Right cardiac atrium (tissue), 5 donors: ENCODE measurements at regions of chr6 and their contacts with region 1.

Region 1: GRCh38 chr6:168035098-168035660 is 37.7 kb downstream of the KIF25 start:
- DNase-seq: peak; percentile 64 to 89 (median 83)
- ATAC-seq: peak; percentile 79 to 82
- H3K4me3 ChIP-seq: peak overlapping the region; percentile 13
- H3K27ac ChIP-seq: peak overlapping the region; percentile 88
- H3K4me1 ChIP-seq: peaks cover 4% of the 10 kb centered on the region
- H3K27me3 ChIP-seq: no peaks in the 10 kb centered on the region

Region 2: DNA sequence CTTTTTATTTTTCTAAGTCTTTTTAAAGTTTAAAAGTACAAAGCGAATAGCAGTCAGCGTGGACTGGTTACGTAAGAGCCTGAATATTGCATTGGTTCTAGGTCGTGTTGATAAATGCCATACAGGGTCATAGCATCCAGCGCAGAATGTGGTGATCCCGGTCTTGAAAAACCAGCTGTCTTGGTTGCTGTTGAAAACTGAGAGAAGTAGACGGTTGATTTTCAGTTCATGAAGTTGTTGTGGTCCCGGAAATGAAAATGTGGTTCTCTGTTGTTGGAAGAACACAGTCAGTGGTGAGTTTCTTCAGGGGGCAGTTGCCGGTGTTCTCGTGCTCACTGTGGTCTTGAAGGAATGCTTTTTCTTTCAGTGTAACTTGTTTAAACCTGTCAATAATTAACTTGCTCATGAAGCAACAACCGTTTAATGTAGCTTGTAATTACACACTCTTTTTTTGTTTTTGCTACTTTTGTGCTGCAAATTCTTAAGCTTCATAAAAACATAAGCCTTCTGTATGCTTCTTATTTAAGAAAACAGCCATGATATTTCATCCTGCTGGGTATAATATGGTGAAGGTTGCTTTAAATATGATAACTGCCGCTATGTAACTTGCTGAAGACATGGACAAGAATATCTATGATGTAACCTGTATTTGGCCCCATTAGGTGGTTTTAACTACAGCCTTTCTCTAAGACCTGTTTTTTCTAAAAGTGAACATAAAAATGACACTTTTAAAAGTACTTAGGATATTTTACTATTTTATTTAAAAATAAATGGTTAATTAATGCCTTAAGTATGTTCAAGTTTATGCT is 102.5 kb before region 1 on chr6:
- intact Hi-C with region 1: loop called in 1 of 4 experiments (anchors 10 kb)
- DNase-seq: no peak
- ATAC-seq: no peak
- H3K4me3 ChIP-seq: no peak overlapping the region
- H3K27ac ChIP-seq: no peak overlapping the region
- H3K4me1 ChIP-seq: no peaks in the 10 kb centered on the region
- H3K27me3 ChIP-seq: no peaks in the 10 kb centered on the region